HepG2 (cell line): ENCODE measurements at regions of chr16 and their contacts with region 1.

Region 1: DNA sequence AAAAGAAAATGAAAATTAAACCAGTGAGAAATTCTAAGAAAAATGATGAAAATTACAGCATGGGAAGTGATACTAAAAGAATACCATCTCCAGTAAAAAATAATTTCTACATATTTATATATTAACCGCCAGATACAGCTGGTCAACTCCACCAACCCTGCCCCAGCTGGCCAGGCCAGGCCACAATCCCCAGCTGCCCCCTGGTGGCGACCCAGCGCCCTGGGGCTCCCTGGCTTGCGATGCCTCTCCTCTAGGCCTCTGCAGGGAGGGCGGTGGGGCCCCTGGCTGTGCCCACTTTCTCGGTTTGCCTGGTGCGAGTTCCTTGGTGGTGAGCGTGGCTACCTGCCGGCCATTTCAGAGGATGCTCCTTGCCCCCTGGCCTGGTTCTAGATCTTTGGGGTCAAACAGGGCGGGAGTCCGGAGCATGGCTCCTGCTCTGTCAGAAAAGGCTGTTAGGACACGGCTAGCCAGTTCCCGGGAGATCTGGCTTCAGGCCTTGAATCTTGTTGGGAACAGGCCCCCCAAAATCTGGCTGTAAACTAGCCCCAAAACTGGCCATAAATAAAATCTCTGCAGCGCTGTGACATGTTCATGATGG is 14.5 kb downstream of the GLIS2 start:
- DNase-seq: peak; percentile 51
- ATAC-seq: peak; percentile 67
- H3K4me3 ChIP-seq: no peak overlapping the region
- H3K27ac ChIP-seq: no peak overlapping the region
- H3K4me1 ChIP-seq: peaks cover 31% of the 10 kb centered on the region
- H3K27me3 ChIP-seq: no peaks in the 10 kb centered on the region
- CTCF ChIP-seq: peak; percentile 94
- EP300 ChIP-seq: no peak
- POLR2A ChIP-seq: no peak
- RAD21 ChIP-seq: peak; percentile 93

Region 2: GRCh38 chr16:4200000-4200780 is 130.2 kb before region 1 on chr16:
- CTCF ChIA-PET with region 1: interaction called, 13 read pairs
- POLR2A ChIA-PET with region 1: interaction called, 5 read pairs
- in situ Hi-C with region 1: no loop called
- intact Hi-C with region 1: loop called (anchors 1 kb)
- DNase-seq: peak; percentile 50
- ATAC-seq: peak; percentile 94
- H3K4me3 ChIP-seq: no peak overlapping the region
- H3K27ac ChIP-seq: no peak overlapping the region
- H3K4me1 ChIP-seq: peaks cover 5% of the 10 kb centered on the region; the same call in 1 of the 2 replicates
- H3K27me3 ChIP-seq: peaks cover 0 to 19% of the 10 kb centered on the region in 2 experiments; a peak in 1 of 5 replicates
- CTCF ChIP-seq: peak; percentile 95
- EP300 ChIP-seq: no peak
- POLR2A ChIP-seq: no peak
- RAD21 ChIP-seq: peak; percentile 92

Region 3: GRCh38 chr16:4261557-4262172 is 68.7 kb before region 1 on chr16:
- CTCF ChIA-PET with region 1: interaction called, 13 read pairs
- POLR2A ChIA-PET with region 1: interaction called, 6 read pairs
- in situ Hi-C with region 1: no loop called
- intact Hi-C with region 1: loop called (anchors 1 kb)
- DNase-seq: peak; percentile 26
- ATAC-seq: peak; percentile 68
- H3K4me3 ChIP-seq: no peak overlapping the region
- H3K27ac ChIP-seq: no peak overlapping the region
- H3K4me1 ChIP-seq: peaks cover 29% of the 10 kb centered on the region
- H3K27me3 ChIP-seq: no peaks in the 10 kb centered on the region
- CTCF ChIP-seq: peak; percentile 91
- EP300 ChIP-seq: no peak
- POLR2A ChIP-seq: no peak
- RAD21 ChIP-seq: peak; percentile 83

Region 4: DNA sequence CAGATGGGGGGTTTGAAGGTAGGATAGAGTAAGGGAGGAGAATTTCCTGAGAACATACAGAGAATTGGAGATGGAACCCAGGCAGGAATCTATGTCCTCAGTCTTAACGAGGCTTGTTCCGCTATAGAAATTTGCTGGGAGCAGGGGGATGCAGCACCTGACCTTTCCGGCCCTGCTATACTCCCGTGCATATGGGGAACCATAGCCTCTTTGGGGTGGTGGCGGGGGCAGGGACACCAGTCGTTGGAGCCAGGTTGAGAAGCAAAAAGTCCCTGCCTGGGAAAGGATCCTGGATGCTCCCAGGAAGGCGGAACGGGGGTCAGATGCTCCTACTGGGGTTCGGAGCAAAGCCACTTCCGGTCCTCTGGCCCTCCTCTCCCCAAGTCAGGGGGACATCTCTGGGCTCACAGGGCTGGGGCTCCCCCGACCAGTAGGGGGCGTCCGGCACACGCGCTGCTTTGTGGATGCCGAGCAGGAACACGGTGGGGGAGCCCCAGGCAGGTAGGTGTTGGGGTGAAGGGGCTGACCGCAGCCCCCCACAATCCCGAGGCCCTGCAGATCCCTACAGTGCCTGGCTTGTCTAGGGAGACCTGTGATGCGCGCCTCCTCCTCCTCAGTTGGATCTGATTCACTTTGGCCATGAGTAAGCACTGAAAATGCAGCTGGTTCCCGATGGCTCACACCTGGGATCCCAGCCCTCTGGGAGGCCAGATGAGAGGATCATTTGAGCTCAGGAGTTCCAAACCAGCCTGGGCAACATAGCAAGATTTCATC is 42.0 kb before region 1 on chr16:
- CTCF ChIA-PET with region 1: interaction called, 43 read pairs
- POLR2A ChIA-PET with region 1: interaction called, 8 read pairs
- in situ Hi-C with region 1: no loop called
- intact Hi-C with region 1: loop called (anchors 2 kb)
- DNase-seq: peak; percentile 55
- ATAC-seq: peak; percentile 77
- H3K4me3 ChIP-seq: peak overlapping the region; percentile 7 to 55 (median 21); a peak in 4 of 6 replicates
- H3K27ac ChIP-seq: no peak overlapping the region
- H3K4me1 ChIP-seq: peaks cover 65% of the 10 kb centered on the region
- H3K27me3 ChIP-seq: peaks cover 0 to 14% of the 10 kb centered on the region in 2 experiments; a peak in 4 of 5 replicates
- CTCF ChIP-seq: peak; percentile 97
- EP300 ChIP-seq: no peak
- POLR2A ChIP-seq: no peak
- RAD21 ChIP-seq: peak; percentile 88

Region 5: DNA sequence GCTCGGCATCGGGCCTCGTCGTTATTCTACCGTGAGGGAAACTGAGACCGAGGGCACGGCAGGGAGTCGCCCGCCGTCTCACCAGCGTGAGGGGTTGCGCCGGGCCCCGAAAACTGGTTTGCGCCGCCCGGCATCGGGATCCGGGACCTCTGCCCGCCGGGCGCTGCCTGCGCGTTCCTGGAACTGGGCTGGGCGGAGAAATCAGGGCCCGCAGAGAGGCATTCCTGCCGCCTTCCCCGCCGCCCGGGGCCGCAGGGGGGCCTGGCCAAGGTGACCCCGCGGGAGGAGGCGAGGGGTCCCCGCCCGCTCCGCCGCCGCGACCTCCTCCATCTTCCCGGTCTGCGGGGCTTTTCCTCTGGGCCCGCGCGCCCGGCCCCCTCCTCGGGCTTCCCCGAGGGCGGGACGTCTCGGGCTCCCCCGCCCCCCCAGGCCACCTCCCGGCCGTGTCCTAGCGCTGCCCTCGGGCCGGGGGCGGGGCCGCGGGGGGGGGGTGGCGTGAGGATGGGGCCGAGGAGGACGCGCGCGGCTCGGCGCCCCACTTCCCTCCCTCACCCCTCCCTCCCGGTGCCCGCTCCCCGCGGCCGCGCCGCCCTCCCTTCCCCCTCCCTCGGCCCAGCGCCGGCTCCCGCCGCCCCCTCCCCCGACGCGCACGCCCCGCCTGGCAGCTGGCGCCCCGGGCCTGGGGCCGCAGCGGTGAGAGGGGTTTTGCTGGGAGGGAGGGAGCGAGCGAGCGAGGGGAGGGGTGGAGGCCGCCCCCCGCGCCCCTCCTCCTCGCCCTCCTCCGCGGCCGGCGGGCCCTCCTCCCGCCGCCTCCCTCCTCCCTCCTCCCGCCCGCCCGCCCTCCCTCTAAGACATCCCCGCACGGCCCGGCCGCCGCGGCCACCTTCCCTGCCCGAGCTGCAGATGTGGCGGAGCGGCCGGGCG is 14.9 kb before region 1 on chr16 and contains the start of gene GLIS2:
- CTCF ChIA-PET with region 1: interaction called, 69 read pairs
- POLR2A ChIA-PET with region 1: interaction called, 14 read pairs
- in situ Hi-C with region 1: no loop called
- intact Hi-C with region 1: loop called (anchors 1 kb)
- DNase-seq: no peak
- ATAC-seq: no peak
- H3K4me3 ChIP-seq: peak within 1 kb of the TSS; percentile 49 to 69 (median 58)
- H3K27ac ChIP-seq: no peak within 1 kb of the TSS
- H3K4me1 ChIP-seq: peaks cover 78% of the 10 kb centered on the region
- H3K27me3 ChIP-seq: peaks cover 3 to 35% of the 10 kb centered on the region in 2 experiments; a peak in 4 of 5 replicates
- CTCF ChIP-seq: no peak
- EP300 ChIP-seq: no peak
- POLR2A ChIP-seq: no peak
- RAD21 ChIP-seq: no peak
- total RNA-seq, gene GLIS2: 0.24 and 0.29 TPM in 2 replicates